ENCODE measurements at regions of chr1 and their contacts with region 1.

Region 1: GRCh38 chr1:67390041-67390887 is 39.9 kb downstream of the SERBP1 start:
- DNase-seq: no peak
- ATAC-seq: no peak
- H3K4me3 ChIP-seq: no peak overlapping the region
- H3K4me3 Mint-ChIP-seq: no peak overlapping the region
- H3K27ac ChIP-seq: no peak overlapping the region
- H3K27ac Mint-ChIP-seq: no peak overlapping the region
- H3K4me1 ChIP-seq: no peaks in the 10 kb centered on the region
- H3K4me1 Mint-ChIP-seq: no peaks in the 10 kb centered on the region
- H3K27me3 ChIP-seq: no peaks in the 10 kb centered on the region
- H3K27me3 Mint-ChIP-seq: no peaks in the 10 kb centered on the region

Region 2: GRCh38 chr1:66452162-66452561 is 938.1 kb before region 1 on chr1:
- CTCF ChIA-PET with region 1: no interaction called
- POLR2A ChIA-PET with region 1: no interaction called
- DNase-seq: no peak
- ATAC-seq: no peak
- H3K4me3 ChIP-seq: no peak overlapping the region
- H3K4me3 Mint-ChIP-seq: no peak overlapping the region
- H3K27ac ChIP-seq: no peak overlapping the region
- H3K27ac Mint-ChIP-seq: no peak overlapping the region
- H3K4me1 ChIP-seq: no peaks in the 10 kb centered on the region
- H3K4me1 Mint-ChIP-seq: no peaks in the 10 kb centered on the region
- H3K27me3 ChIP-seq: no peaks in the 10 kb centered on the region
- H3K27me3 Mint-ChIP-seq: peaks cover 0 to 4% of the 10 kb centered on the region in 2 donors

Region 3: DNA sequence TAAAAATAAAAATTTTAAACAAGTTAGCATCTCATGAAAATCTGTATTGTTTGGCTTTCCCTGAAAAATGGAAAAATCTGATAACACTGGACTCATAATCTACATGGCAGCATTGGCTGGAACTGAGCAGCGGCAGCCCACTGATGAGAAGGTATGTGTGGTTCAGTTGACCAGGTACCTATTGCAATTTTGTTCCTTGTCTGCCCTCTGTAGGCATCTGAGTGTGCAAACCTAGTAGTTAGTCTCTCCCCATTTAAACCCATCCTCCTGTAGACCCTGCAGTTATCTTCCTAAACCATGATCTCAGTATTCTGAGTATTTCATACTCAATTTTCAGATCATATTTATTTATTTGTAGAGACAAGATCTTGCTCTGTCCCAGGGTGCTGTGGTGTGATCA is 99.4 kb after region 1 on chr1:
- CTCF ChIA-PET with region 1: no interaction called
- POLR2A ChIA-PET with region 1: no interaction called
- DNase-seq: peak in 1 of 35 experiments; percentile 37
- ATAC-seq: no peak
- H3K4me3 ChIP-seq: no peak overlapping the region
- H3K4me3 Mint-ChIP-seq: no peak overlapping the region
- H3K27ac ChIP-seq: no peak overlapping the region
- H3K27ac Mint-ChIP-seq: no peak overlapping the region
- H3K4me1 ChIP-seq: no peaks in the 10 kb centered on the region
- H3K4me1 Mint-ChIP-seq: no peaks in the 10 kb centered on the region
- H3K27me3 ChIP-seq: no peaks in the 10 kb centered on the region
- H3K27me3 Mint-ChIP-seq: no peaks in the 10 kb centered on the region

Region 4: GRCh38 chr1:67544921-67545320 is 154.7 kb after region 1 on chr1:
- CTCF ChIA-PET with region 1: no interaction called
- POLR2A ChIA-PET with region 1: interaction called in 1 of 2 experiments, 11 read pairs
- DNase-seq: no peak
- ATAC-seq: no peak
- H3K4me3 ChIP-seq: no peak overlapping the region
- H3K4me3 Mint-ChIP-seq: no peak overlapping the region
- H3K27ac ChIP-seq: no peak overlapping the region
- H3K27ac Mint-ChIP-seq: no peak overlapping the region
- H3K4me1 ChIP-seq: no peaks in the 10 kb centered on the region
- H3K4me1 Mint-ChIP-seq: no peaks in the 10 kb centered on the region
- H3K27me3 ChIP-seq: no peaks in the 10 kb centered on the region
- H3K27me3 Mint-ChIP-seq: peaks cover 0 to 4% of the 10 kb centered on the region in 2 donors

Region 5: DNA sequence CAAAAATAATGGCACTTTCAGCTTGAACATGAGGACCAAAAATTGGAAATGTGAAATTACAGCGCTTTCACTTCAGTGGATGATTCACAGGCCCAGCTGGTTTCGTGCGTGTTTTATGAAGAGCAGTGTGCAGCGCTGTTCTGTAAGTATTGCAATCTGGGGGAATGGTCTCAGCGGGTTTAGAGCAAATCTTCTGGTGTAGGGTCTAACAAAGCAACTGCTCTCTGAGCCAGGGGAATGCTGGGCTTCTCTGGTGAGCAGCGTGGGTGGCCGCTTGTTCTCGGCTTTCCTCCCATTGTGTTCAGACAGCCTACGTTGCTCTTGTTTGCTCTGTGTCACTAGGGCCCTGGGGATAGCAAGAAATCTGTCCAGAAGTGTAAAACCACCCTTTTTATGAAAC is 252.4 kb after region 1 on chr1:
- CTCF ChIA-PET with region 1: no interaction called
- POLR2A ChIA-PET with region 1: no interaction called
- DNase-seq: no peak
- ATAC-seq: no peak
- H3K4me3 ChIP-seq: no peak overlapping the region
- H3K4me3 Mint-ChIP-seq: no peak overlapping the region
- H3K27ac ChIP-seq: no peak overlapping the region
- H3K27ac Mint-ChIP-seq: no peak overlapping the region
- H3K4me1 ChIP-seq: no peaks in the 10 kb centered on the region
- H3K4me1 Mint-ChIP-seq: no peaks in the 10 kb centered on the region
- H3K27me3 ChIP-seq: no peaks in the 10 kb centered on the region
- H3K27me3 Mint-ChIP-seq: no peaks in the 10 kb centered on the region